ENCODE measurements at regions of chr17 and their contacts with region 1.

Region 1: DNA sequence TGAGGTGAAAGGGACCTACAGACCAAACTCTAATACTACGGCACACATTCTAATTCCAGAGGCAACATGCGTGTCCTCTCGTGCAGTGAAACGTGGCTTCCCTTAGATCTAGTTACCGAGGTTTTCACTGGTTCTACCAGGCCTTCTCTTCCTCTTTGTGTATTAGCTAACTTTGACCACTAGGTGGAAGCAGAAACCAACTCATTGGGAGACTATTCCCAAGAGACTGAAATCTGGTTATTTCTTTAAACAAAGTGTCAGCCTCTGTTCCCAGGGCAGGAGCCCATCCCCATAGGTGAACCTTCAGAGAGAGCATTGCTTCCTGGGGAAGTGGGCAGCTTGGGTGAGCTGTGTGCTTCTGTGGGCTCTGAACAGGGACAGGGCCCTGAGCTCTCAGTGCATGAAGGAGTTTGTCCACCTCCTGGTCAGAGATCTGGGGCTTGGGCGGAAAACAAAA is 19.7 kb upstream of the RCVRN start:
- DNase-seq: no peak
- H3K4me3 ChIP-seq: no peak overlapping the region
- H3K27ac ChIP-seq: peak overlapping the region in 1 of 4 donors; percentile 2
- H3K4me1 ChIP-seq: no peaks in the 10 kb centered on the region
- H3K27me3 ChIP-seq: no peaks in the 10 kb centered on the region
- CTCF ChIP-seq: peak; percentile 72 to 89 (median 80)
- EP300 ChIP-seq: no peak
- POLR2A ChIP-seq: no peak

Region 2: DNA sequence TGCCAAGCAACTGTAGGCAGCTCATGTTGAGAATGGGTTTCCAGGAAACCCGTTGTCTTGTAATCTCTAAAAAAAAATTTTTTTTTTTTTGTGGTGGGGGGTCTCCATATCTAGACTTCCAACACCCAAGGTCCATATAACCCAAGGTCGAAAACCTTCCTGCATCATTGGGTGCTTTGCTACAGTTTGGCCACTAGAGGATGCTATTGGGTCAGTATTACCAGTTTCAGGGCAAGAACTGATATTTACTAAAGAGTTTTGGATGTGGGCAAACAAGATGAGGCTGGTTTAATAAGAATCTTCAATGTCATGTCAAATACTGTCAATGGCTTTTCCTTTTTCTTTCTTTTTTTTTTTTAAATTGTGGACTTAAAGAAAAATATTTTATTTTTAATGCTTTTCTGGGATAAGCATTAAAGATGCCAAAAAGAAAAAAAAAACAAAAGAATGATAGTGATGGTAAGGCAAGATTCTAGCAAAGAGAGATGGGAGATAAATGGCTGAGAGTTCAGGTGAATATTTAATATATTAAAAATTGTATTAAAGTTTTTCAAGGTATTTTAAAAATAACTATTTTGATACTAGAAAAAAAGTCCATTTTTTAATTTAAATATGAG is 195.6 kb before region 1 on chr17:
- intact Hi-C with region 1: loop called (anchors 2 kb)
- DNase-seq: no peak
- H3K4me3 ChIP-seq: no peak overlapping the region
- H3K27ac ChIP-seq: no peak overlapping the region
- H3K4me1 ChIP-seq: no peaks in the 10 kb centered on the region
- H3K27me3 ChIP-seq: peaks cover 0 to 8% (median 7%) of the 10 kb centered on the region in 3 donors
- CTCF ChIP-seq: peak; percentile 87 to 99 (median 95)
- EP300 ChIP-seq: no peak
- POLR2A ChIP-seq: no peak

Region 3: DNA sequence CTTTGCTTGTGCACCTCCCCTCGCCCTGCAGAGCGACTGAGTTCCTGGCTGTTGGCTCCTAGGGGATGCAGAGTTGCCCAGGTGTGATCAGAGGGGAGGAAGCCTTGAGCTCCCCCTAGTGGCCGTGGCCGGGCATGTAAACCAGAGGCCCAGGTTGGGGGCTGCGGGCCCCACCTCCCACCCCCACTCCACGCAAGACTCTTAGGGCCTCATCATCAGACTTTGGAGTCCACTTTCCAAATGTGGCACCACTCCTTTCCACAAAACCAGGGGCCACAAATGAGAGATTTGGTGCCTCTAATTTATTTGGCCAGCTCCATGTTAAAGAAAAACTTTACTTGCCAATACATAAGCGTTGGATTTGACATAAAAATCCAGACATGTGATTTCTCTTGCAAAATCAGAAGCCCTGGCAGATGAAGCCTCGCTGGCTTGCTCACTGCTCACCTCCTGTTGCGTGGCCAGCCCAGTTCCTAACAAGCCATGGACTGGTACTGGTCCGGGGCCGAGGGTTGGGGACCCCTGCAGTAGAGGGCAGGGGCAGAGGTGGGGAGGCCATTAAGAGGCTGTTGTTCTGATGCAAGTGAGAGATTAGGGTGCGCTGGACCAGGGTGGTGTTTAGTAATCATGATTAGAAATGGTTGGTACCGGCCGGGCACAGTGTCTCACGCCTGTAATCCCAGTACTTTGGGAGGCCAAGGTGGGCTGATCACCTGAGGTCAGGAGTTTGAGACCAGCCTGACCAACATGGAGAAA is 302.3 kb after region 1 on chr17:
- intact Hi-C with region 1: loop called (anchors 5 kb)
- DNase-seq: no peak
- H3K4me3 ChIP-seq: no peak overlapping the region
- H3K27ac ChIP-seq: no peak overlapping the region
- H3K4me1 ChIP-seq: no peaks in the 10 kb centered on the region
- H3K27me3 ChIP-seq: no peaks in the 10 kb centered on the region
- CTCF ChIP-seq: peak in 3 of 4 experiments; percentile 65 to 83 (median 80)
- EP300 ChIP-seq: no peak
- POLR2A ChIP-seq: no peak

Region 4: GRCh38 chr17:10618202-10618635 is 693.5 kb after region 1 on chr17:
- intact Hi-C with region 1: loop called (anchors 5 kb)
- DNase-seq: peak; percentile 78
- H3K4me3 ChIP-seq: no peak overlapping the region
- H3K27ac ChIP-seq: no peak overlapping the region
- H3K4me1 ChIP-seq: peaks cover 0 to 23% (median 16%) of the 10 kb centered on the region in 4 donors
- H3K27me3 ChIP-seq: no peaks in the 10 kb centered on the region
- CTCF ChIP-seq: peak; percentile 37 to 77 (median 75)
- EP300 ChIP-seq: no peak
- POLR2A ChIP-seq: no peak